ENCODE measurements at regions of chr4 and their contacts with region 1.

Region 1: DNA sequence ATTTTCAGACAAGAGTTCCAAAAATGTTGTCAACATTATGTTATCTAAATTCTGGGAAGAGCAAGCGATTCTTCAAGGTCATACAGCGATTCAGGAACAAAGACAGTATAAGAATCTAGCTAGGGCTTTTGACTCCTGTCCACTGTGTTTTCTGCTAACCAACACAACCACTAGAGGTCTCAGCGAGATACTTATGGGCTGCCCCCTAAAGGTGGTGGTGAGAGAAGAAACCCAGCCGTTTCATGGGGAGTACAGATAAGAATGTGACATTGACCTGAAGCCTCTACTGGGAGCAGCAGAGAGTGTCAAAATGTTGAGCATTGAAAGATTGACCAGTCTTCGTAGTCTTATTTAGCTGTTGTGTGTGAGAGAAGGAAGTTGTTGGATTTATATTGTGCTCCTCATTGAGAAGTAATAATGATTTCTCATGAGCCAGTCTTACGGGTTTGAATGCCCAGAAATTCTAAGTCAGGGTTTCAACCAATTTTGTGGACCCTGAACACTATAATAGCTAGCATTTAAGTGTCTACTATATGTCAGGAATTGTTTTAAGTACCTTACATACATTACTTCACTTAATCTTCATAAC is 168.3 kb downstream of the SPRY1 start:
- DNase-seq: peak in 4 of 5 donors; percentile 42 to 50 (median 45)
- H3K4me3 ChIP-seq: no peak overlapping the region
- H3K4me3 Mint-ChIP-seq: no peak overlapping the region
- H3K27ac ChIP-seq: no peak overlapping the region
- H3K27ac Mint-ChIP-seq: no peak overlapping the region
- H3K4me1 ChIP-seq: no peaks in the 10 kb centered on the region
- H3K4me1 Mint-ChIP-seq: peaks cover 0 to 4% (median 1%) of the 10 kb centered on the region in 4 donors
- H3K27me3 ChIP-seq: no peaks in the 10 kb centered on the region
- H3K27me3 Mint-ChIP-seq: peaks cover 0 to 4% of the 10 kb centered on the region in 2 donors

Region 2: GRCh38 chr4:123390846-123391456 is 173.9 kb before region 1 on chr4:
- CTCF ChIA-PET with region 1: interaction called, 5 read pairs
- POLR2A ChIA-PET with region 1: no interaction called
- intact Hi-C with region 1: loop called (anchors 2 kb)
- DNase-seq: peak in 4 of 5 donors; percentile 12 to 29 (median 16)
- H3K4me3 ChIP-seq: no peak overlapping the region
- H3K4me3 Mint-ChIP-seq: no peak overlapping the region
- H3K27ac ChIP-seq: no peak overlapping the region
- H3K27ac Mint-ChIP-seq: no peak overlapping the region
- H3K4me1 ChIP-seq: no peaks in the 10 kb centered on the region
- H3K4me1 Mint-ChIP-seq: no peaks in the 10 kb centered on the region
- H3K27me3 ChIP-seq: no peaks in the 10 kb centered on the region
- H3K27me3 Mint-ChIP-seq: peaks cover 4 to 6% of the 10 kb centered on the region in 2 donors

Region 3: GRCh38 chr4:123599920-123600810 is 35.3 kb after region 1 on chr4:
- CTCF ChIA-PET with region 1: interaction called, 11 read pairs
- POLR2A ChIA-PET with region 1: no interaction called
- intact Hi-C with region 1: no loop called
- DNase-seq: peak; percentile 27 to 65 (median 60)
- H3K4me3 ChIP-seq: no peak overlapping the region
- H3K4me3 Mint-ChIP-seq: peak overlapping the region; percentile 1 to 84 (median 30)
- H3K27ac ChIP-seq: no peak overlapping the region
- H3K27ac Mint-ChIP-seq: peak overlapping the region; percentile 67 to 94 (median 77)
- H3K4me1 ChIP-seq: peaks cover 21% of the 10 kb centered on the region
- H3K4me1 Mint-ChIP-seq: peaks cover 10 to 19% (median 16%) of the 10 kb centered on the region in 4 donors
- H3K27me3 ChIP-seq: no peaks in the 10 kb centered on the region
- H3K27me3 Mint-ChIP-seq: no peaks in the 10 kb centered on the region

Region 4: DNA sequence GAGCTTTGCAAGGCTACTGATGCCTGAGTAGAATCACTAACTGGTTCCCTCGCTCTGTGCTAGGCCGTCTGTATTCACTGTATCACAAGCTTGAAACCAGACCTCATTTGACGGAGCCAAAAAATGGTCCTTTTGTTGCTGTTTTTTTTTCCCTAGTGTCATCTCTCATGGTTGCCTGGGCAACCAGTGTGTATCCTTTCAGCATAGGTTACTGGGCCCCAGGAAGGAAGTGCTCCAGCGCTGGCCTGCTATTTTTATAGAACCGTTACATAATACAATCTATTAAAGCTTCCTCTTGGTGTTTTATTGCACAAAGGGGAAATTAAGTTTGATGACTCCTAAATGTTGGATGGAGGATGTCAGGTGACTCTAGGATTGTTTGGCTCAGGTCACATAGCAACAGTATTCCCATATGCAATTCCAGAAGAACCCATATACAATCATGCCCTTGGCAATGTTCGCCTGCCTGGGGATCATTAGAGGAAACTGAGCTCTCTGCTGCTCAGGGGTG is 52.2 kb after region 1 on chr4:
- CTCF ChIA-PET with region 1: interaction called, 3 read pairs
- POLR2A ChIA-PET with region 1: no interaction called
- intact Hi-C with region 1: loop called (anchors 5 kb)
- DNase-seq: peak; percentile 64 to 80 (median 80)
- H3K4me3 ChIP-seq: no peak overlapping the region
- H3K4me3 Mint-ChIP-seq: peak overlapping the region; percentile 5 to 72 (median 36)
- H3K27ac ChIP-seq: peak overlapping the region; percentile 31
- H3K27ac Mint-ChIP-seq: peak overlapping the region; percentile 83 to 99 (median 94)
- H3K4me1 ChIP-seq: peaks cover 20% of the 10 kb centered on the region
- H3K4me1 Mint-ChIP-seq: peaks cover 12 to 16% (median 14%) of the 10 kb centered on the region in 4 donors
- H3K27me3 ChIP-seq: no peaks in the 10 kb centered on the region
- H3K27me3 Mint-ChIP-seq: no peaks in the 10 kb centered on the region